HCT116 (cell line): ENCODE measurements at regions of chr2 and their contacts with region 1.

Region 1: GRCh38 chr2:54106631-54107454 is 8.6 kb upstream of the ACYP2 start:
- DNase-seq: peak; percentile 53
- ATAC-seq: peak; percentile 80
- H3K4me3 ChIP-seq: 0 out of 4 replicates have a peak overlapping the region, but pooled peaks of 1 of the 2 experiments have one; percentile 13
- H3K27ac ChIP-seq: no peak overlapping the region
- H3K4me1 ChIP-seq: peaks cover 12 to 18% of the 10 kb centered on the region in 2 experiments
- H3K27me3 ChIP-seq: no peaks in the 10 kb centered on the region
- CTCF ChIP-seq: peak; percentile 74 to 81 (median 78); a peak in 5 of 6 replicates
- POLR2A ChIP-seq: no peak
- RAD21 ChIP-seq: peak; percentile 88

Region 2: GRCh38 chr2:54084600-54084999 is 22.2 kb before region 1 on chr2:
- CTCF ChIA-PET with region 1: no interaction called
- POLR2A ChIA-PET with region 1: no interaction called
- RAD21 ChIA-PET with region 1: no interaction called
- intact Hi-C with region 1: no loop called
- DNase-seq: no peak
- ATAC-seq: peak; percentile 85
- H3K4me3 ChIP-seq: no peak overlapping the region
- H3K27ac ChIP-seq: no peak overlapping the region
- H3K4me1 ChIP-seq: peaks cover 2 to 8% of the 10 kb centered on the region in 2 experiments; a peak in 3 of 4 replicates
- H3K27me3 ChIP-seq: no peaks in the 10 kb centered on the region
- CTCF ChIP-seq: peak; percentile 28 to 35 (median 35); a peak in 3 of 6 replicates
- POLR2A ChIP-seq: no peak
- RAD21 ChIP-seq: peak; percentile 71

Region 3: GRCh38 chr2:54522624-54523281 is 415.9 kb after region 1 on chr2:
- CTCF ChIA-PET with region 1: interaction called, 16 read pairs
- POLR2A ChIA-PET with region 1: no interaction called
- RAD21 ChIA-PET with region 1: interaction called in 1 of 2 experiments, 4 read pairs
- intact Hi-C with region 1: no loop called
- DNase-seq: peak; percentile 60
- ATAC-seq: peak; percentile 97
- H3K4me3 ChIP-seq: no peak overlapping the region
- H3K27ac ChIP-seq: no peak overlapping the region
- H3K4me1 ChIP-seq: peaks cover 13 to 31% of the 10 kb centered on the region in 2 experiments
- H3K27me3 ChIP-seq: no peaks in the 10 kb centered on the region
- CTCF ChIP-seq: peak; percentile 54 to 69 (median 63)
- POLR2A ChIP-seq: no peak
- RAD21 ChIP-seq: peak; percentile 87

Region 4: GRCh38 chr2:54579684-54580620 is 473.1 kb after region 1 on chr2:
- CTCF ChIA-PET with region 1: no interaction called
- POLR2A ChIA-PET with region 1: no interaction called
- RAD21 ChIA-PET with region 1: no interaction called
- intact Hi-C with region 1: no loop called
- DNase-seq: no peak
- ATAC-seq: no peak
- H3K4me3 ChIP-seq: no peak overlapping the region
- H3K27ac ChIP-seq: no peak overlapping the region
- H3K4me1 ChIP-seq: peaks cover 0 to 5% of the 10 kb centered on the region in 2 experiments; a peak in 2 of 4 replicates
- H3K27me3 ChIP-seq: no peaks in the 10 kb centered on the region
- CTCF ChIP-seq: no peak
- POLR2A ChIP-seq: no peak
- RAD21 ChIP-seq: no peak

Region 5: GRCh38 chr2:54657664-54658083 is 550.8 kb after region 1 on chr2:
- CTCF ChIA-PET with region 1: interaction called, 10 read pairs
- POLR2A ChIA-PET with region 1: no interaction called
- RAD21 ChIA-PET with region 1: no interaction called
- intact Hi-C with region 1: no loop called
- DNase-seq: peak; percentile 23
- ATAC-seq: peak; percentile 98
- H3K4me3 ChIP-seq: no peak overlapping the region
- H3K27ac ChIP-seq: no peak overlapping the region
- H3K4me1 ChIP-seq: no peaks in the 10 kb centered on the region
- H3K27me3 ChIP-seq: no peaks in the 10 kb centered on the region
- CTCF ChIP-seq: peak; percentile 56 to 70 (median 68); a peak in 5 of 6 replicates
- POLR2A ChIP-seq: no peak
- RAD21 ChIP-seq: peak; percentile 73

Region 6: GRCh38 chr2:54838585-54839035 is 731.8 kb after region 1 on chr2:
- CTCF ChIA-PET with region 1: interaction called, 18 read pairs
- POLR2A ChIA-PET with region 1: no interaction called
- RAD21 ChIA-PET with region 1: interaction called in 1 of 2 experiments, 4 read pairs
- intact Hi-C with region 1: loop called (anchors 10 kb)
- DNase-seq: peak; percentile 46
- ATAC-seq: peak; percentile 94
- H3K4me3 ChIP-seq: no peak overlapping the region
- H3K27ac ChIP-seq: no peak overlapping the region
- H3K4me1 ChIP-seq: no peaks in the 10 kb centered on the region
- H3K27me3 ChIP-seq: no peaks in the 10 kb centered on the region
- CTCF ChIP-seq: peak; percentile 76 to 95 (median 89)
- POLR2A ChIP-seq: no peak
- RAD21 ChIP-seq: peak; percentile 77